Transverse colon (tissue), 4 donors: ENCODE measurements at regions of chr7 and their contacts with region 1.

Region 1: GRCh38 chr7:141533149-141533949 is 17.9 kb upstream of the AGK start:
- DNase-seq: peak; percentile 64
- H3K4me3 ChIP-seq: no peak overlapping the region
- H3K27ac ChIP-seq: no peak overlapping the region
- H3K4me1 ChIP-seq: peaks cover 0 to 2% (median 0%) of the 10 kb centered on the region in 4 donors
- H3K27me3 ChIP-seq: peaks cover 9% of the 10 kb centered on the region
- CTCF ChIP-seq: peak; percentile 67 to 94 (median 90)
- EP300 ChIP-seq: no peak
- POLR2A ChIP-seq: no peak

Region 2: DNA sequence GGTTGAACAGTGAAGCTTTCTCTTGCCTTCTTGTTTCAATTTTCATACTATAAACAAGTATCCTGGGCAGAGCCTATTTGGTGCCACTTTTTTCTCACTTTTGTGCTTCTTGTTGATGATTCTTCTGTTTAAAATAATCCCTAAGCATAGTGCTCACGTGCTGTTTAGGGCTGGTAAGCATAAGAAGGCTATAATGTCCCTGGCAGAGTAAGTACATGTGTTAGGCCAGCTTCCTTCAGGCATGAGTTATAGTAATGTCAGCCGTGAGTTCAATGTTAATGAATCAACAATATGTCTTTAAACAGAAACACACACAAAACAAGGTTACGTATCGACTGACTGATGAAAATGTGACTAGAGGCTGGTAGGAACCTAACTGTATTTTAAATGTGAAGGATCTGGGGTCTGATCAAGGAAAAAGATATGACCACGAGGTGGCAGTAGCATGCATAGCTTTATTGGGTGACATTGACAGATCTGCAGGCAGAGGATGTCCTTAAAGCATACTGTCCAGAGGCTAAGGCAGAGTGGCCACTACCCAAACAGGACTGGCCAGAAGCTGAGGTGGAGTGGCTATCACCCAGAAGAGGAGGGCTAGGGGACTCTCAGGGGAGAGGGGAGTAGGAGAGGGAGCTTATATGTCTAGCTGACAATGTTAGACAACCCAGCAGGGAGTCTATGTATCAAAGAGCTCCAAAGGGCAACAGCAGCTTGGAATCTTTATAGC is 722.4 kb before region 1 on chr7:
- in situ Hi-C with region 1: loop called in 2 of 4 experiments (anchors 25 kb)
- intact Hi-C with region 1: no loop called
- DNase-seq: peak; percentile 50
- H3K4me3 ChIP-seq: no peak overlapping the region
- H3K27ac ChIP-seq: no peak overlapping the region
- H3K4me1 ChIP-seq: peaks cover 0 to 5% (median 0%) of the 10 kb centered on the region in 4 donors
- H3K27me3 ChIP-seq: no peaks in the 10 kb centered on the region
- CTCF ChIP-seq: peak; percentile 65 to 79 (median 73)
- EP300 ChIP-seq: no peak
- POLR2A ChIP-seq: no peak

Region 3: GRCh38 chr7:140828741-140829140 is 704.6 kb before region 1 on chr7:
- in situ Hi-C with region 1: loop called in 2 of 4 experiments (anchors 25 kb)
- intact Hi-C with region 1: loop called (anchors 10 kb)
- DNase-seq: no peak
- H3K4me3 ChIP-seq: no peak overlapping the region
- H3K27ac ChIP-seq: no peak overlapping the region
- H3K4me1 ChIP-seq: no peaks in the 10 kb centered on the region
- H3K27me3 ChIP-seq: no peaks in the 10 kb centered on the region
- CTCF ChIP-seq: no peak
- EP300 ChIP-seq: no peak
- POLR2A ChIP-seq: no peak